ENCODE measurements at regions of chr15 and their contacts with region 1.

Region 1: DNA sequence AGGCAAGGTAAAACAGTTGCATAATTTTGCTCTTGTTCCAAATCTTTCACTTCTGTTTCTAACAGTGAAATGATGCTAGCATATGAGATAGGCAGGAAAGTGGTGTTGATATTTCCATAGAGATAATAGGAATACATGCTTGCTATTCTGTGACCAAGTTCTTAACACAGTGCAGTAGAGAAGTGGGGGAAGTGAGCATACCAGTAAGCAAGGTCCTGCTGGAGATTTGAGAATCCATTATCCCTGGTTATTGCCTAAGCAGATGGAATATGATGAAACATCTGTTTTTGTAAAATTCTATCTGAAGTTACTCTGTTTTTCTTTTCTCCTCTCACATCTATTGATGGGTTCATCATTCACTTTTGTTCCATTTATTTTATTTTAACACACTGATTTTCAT is 28.7 kb downstream of the USP8 start:
- DNase-seq: no peak
- ATAC-seq: no peak
- H3K4me3 ChIP-seq: no peak overlapping the region
- H3K4me3 Mint-ChIP-seq: no peak overlapping the region
- H3K27ac ChIP-seq: peak overlapping the region in 1 of 2 donors; percentile 11
- H3K27ac Mint-ChIP-seq: peak overlapping the region; percentile 23
- H3K4me1 ChIP-seq: no peaks in the 10 kb centered on the region
- H3K4me1 Mint-ChIP-seq: peaks cover 6% of the 10 kb centered on the region
- H3K27me3 ChIP-seq: no peaks in the 10 kb centered on the region
- H3K27me3 Mint-ChIP-seq: no peaks in the 10 kb centered on the region
- CTCF ChIP-seq: no peak

Region 2: DNA sequence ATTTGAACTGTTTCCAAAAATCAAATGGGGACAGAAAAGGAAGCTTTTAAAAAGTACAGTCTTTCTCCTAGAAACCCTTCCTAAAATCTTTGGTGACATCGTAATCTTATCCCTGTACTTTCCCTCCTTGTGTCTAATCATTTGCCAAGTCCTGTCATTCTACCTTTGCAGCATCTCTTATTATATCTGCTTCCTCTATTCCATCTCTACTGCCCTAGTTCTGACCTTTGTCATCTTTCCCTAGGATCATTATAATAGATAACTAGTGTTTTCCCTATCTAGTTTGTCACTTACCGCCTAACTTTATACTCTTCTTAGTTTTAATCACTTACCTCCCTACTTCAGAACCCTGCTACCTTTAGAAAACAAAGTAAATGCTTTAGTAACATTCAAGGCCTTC is 17.2 kb before region 1 on chr15:
- CTCF ChIA-PET with region 1: no interaction called
- POLR2A ChIA-PET with region 1: no interaction called
- intact Hi-C with region 1: no loop called
- DNase-seq: no peak
- ATAC-seq: no peak
- H3K4me3 ChIP-seq: no peak overlapping the region
- H3K4me3 Mint-ChIP-seq: no peak overlapping the region
- H3K27ac ChIP-seq: peak overlapping the region in 1 of 2 donors; percentile 68
- H3K27ac Mint-ChIP-seq: peak overlapping the region; percentile 51
- H3K4me1 ChIP-seq: peaks cover 2 to 3% of the 10 kb centered on the region in 2 donors
- H3K4me1 Mint-ChIP-seq: peaks cover 30% of the 10 kb centered on the region
- H3K27me3 ChIP-seq: no peaks in the 10 kb centered on the region
- H3K27me3 Mint-ChIP-seq: no peaks in the 10 kb centered on the region
- CTCF ChIP-seq: no peak

Region 3: GRCh38 chr15:50484781-50485180 is 31.9 kb after region 1 on chr15:
- CTCF ChIA-PET with region 1: no interaction called
- POLR2A ChIA-PET with region 1: no interaction called
- intact Hi-C with region 1: loop called (anchors 5 kb)
- DNase-seq: peak; percentile 43
- ATAC-seq: peak; percentile 54
- H3K4me3 ChIP-seq: peak overlapping the region in 2 of 5 experiments; percentile 17 to 26
- H3K4me3 Mint-ChIP-seq: peak overlapping the region; percentile 63
- H3K27ac ChIP-seq: peak overlapping the region in 1 of 2 donors; percentile 39
- H3K27ac Mint-ChIP-seq: peak overlapping the region; percentile 81
- H3K4me1 ChIP-seq: peaks cover 19 to 27% of the 10 kb centered on the region in 2 donors
- H3K4me1 Mint-ChIP-seq: peaks cover 36% of the 10 kb centered on the region
- H3K27me3 ChIP-seq: no peaks in the 10 kb centered on the region
- H3K27me3 Mint-ChIP-seq: no peaks in the 10 kb centered on the region
- CTCF ChIP-seq: no peak

Region 4: GRCh38 chr15:50496692-50497091 is 43.8 kb after region 1 on chr15:
- CTCF ChIA-PET with region 1: no interaction called
- POLR2A ChIA-PET with region 1: no interaction called
- intact Hi-C with region 1: no loop called
- DNase-seq: no peak
- ATAC-seq: no peak
- H3K4me3 ChIP-seq: no peak overlapping the region
- H3K4me3 Mint-ChIP-seq: no peak overlapping the region
- H3K27ac ChIP-seq: no peak overlapping the region
- H3K27ac Mint-ChIP-seq: no peak overlapping the region
- H3K4me1 ChIP-seq: peaks cover 4 to 7% of the 10 kb centered on the region in 2 donors
- H3K4me1 Mint-ChIP-seq: peaks cover 8% of the 10 kb centered on the region
- H3K27me3 ChIP-seq: no peaks in the 10 kb centered on the region
- H3K27me3 Mint-ChIP-seq: no peaks in the 10 kb centered on the region
- CTCF ChIP-seq: no peak

Measured in B cell (primary cell).